B cell (primary cell): ENCODE measurements at regions of chr22 and their contacts with region 1.

Region 1: DNA sequence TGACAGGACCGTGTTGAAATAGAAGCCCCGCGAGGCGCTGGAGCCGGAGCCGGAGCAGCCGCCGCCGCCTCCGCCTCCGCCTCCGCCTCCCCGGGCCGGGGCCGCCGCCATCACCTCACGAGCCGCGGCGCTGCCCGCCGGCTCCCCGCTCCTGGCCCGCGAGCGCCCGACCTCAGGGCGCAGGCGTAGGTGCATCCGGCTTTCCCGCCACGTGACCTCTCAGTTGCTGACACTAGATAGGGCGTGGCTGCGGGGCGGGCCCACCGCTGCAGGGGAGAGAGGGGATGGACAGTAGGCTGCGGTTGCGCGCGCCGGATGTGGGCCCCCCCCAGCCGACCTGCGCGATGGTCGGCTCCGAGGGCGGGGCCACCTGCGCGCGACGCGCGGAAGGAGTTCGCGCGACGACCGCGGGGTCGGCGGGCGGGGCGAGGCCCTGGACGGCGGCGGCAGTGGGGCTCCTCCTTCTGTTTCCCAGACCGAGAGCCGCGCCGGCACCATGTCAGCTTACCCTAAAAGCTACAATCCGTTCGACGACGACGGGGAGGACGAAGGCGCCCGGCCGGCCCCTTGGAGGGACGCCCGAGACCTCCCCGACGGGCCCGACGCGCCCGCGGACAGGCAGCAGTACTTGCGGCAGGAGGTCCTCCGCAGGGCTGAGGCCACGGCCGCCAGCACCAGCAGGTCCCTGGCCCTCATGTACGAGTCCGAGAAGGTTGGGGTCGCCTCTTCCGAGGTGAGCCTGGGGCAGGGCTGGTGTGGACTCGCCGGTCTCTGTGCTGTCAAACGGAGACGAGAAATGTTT is at the starts of genes PI4KA and SNAP29:
- DNase-seq: peak; percentile 99
- ATAC-seq: peak; percentile 92
- H3K4me3 ChIP-seq: peak within 1 kb of the TSS; percentile 80 to 94 (median 87)
- H3K4me3 Mint-ChIP-seq: peak within 1 kb of the TSS; percentile 92
- H3K27ac ChIP-seq: peak within 1 kb of the TSS; percentile 76 to 85
- H3K27ac Mint-ChIP-seq: peak within 1 kb of the TSS; percentile 94
- H3K4me1 ChIP-seq: peaks cover 18 to 30% of the 10 kb centered on the region in 2 donors
- H3K4me1 Mint-ChIP-seq: peaks cover 51% of the 10 kb centered on the region
- H3K27me3 ChIP-seq: no peaks in the 10 kb centered on the region
- H3K27me3 Mint-ChIP-seq: no peaks in the 10 kb centered on the region
- CTCF ChIP-seq: no peak
- total RNA-seq, gene PI4KA: 149 and 156 TPM in 2 replicates
- total RNA-seq, gene SNAP29: 17.4 and 18.8 TPM in 2 replicates

Region 2: DNA sequence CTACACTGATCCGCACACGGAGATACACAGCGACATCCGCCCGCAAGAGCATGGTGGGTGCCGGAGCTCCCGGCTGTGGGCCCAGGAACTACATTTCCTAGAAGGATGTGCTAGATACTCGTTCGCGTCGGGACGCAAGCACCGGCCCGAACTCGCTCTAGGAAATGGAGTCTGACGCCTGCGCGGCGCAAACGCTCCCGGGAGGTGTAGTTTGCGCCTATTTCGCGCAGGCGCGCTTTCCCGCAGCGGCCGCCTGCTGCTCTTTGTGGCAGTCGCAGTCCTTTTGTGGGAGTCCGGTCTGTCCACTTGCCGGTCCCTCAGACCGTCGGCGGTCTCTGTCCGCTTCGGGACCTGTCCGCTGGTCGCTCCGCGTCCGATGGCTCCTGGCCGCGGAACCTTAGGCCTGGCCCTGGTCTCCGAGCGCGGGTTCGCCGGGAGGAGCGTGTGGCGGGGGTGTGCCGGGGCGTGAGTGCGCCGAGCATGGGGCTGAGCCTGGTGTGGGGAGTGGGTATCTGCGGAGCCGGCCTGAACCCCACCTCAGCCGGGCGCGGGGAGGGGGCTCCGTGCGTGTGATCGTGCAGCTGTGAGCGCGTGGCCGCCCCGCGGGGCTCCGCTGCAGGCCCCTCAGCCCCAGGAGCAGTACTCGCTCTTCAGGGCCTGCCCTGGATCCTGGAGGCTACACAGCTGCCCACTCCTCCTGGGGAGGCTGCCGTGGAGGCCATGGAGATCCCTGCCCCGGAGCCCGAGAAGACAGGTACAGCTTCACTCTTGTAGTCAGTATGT is 464.7 kb before region 1 on chr22 and contains the start of gene ZNF74:
- CTCF ChIA-PET with region 1: no interaction called
- POLR2A ChIA-PET with region 1: no interaction called
- intact Hi-C with region 1: loop called (anchors 5 kb)
- DNase-seq: peak; percentile 88
- ATAC-seq: peak; percentile 95
- H3K4me3 ChIP-seq: peak within 1 kb of the TSS; percentile 53 to 86 (median 74)
- H3K4me3 Mint-ChIP-seq: peak within 1 kb of the TSS; percentile 97
- H3K27ac ChIP-seq: peak within 1 kb of the TSS; percentile 47 to 77
- H3K27ac Mint-ChIP-seq: peak within 1 kb of the TSS; percentile 95
- H3K4me1 ChIP-seq: peaks cover 10 to 19% of the 10 kb centered on the region in 2 donors
- H3K4me1 Mint-ChIP-seq: peaks cover 29% of the 10 kb centered on the region
- H3K27me3 ChIP-seq: no peaks in the 10 kb centered on the region
- H3K27me3 Mint-ChIP-seq: no peaks in the 10 kb centered on the region
- CTCF ChIP-seq: no peak
- total RNA-seq, gene ZNF74: 11.6 and 13.0 TPM in 2 replicates

Region 3: DNA sequence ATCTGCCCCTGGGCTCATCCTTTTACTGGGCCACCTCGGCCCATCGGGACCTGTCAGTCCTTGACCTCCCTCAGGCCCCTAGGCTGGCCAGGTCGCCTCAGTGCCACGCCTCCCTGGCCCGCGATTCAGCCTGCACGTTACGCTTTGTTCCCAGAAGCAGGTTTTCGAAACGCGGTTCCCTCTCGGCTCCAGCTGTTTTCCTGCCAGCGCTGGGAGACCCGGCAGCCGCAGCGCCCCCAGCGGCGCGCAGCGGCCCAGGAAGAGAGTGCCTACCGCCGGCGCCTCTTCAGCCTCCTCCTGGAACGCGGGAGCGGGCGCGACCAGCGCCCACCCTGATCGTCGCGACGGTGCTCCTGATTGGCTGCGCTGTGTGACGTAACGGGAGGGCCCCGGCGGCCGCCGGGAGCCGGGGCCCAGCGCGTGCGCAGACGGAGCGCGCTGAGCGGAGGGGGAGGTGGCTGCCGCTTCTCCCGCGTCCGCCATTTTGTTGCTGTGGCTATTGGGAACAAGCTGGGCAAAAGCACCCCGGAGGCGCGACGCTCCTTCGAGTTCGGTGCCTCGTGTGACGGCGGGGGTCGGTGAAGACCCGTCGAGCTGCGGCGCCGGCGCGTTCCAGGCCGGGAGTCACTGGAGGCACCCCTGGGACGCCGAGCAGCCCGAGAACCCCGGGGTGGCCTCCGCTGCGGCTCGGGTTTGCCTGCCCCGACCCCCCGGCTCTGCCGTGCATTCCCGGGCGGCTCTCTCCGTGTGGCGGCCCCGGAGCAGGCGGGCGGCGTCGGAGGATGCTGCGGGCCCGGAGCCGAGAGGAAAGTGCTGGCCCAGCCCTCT is 58.4 kb after region 1 on chr22 and contains the start of gene CRKL:
- CTCF ChIA-PET with region 1: interaction called, 3 read pairs
- POLR2A ChIA-PET with region 1: interaction called, 3 read pairs
- intact Hi-C with region 1: loop called (anchors 1 kb)
- DNase-seq: peak; percentile 98
- ATAC-seq: peak; percentile 97
- H3K4me3 ChIP-seq: peak within 1 kb of the TSS; percentile 84 to 96 (median 94)
- H3K4me3 Mint-ChIP-seq: peak within 1 kb of the TSS; percentile 95
- H3K27ac ChIP-seq: peak within 1 kb of the TSS; percentile 59 to 92
- H3K27ac Mint-ChIP-seq: peak within 1 kb of the TSS; percentile 88
- H3K4me1 ChIP-seq: peaks cover 23 to 33% of the 10 kb centered on the region in 2 donors
- H3K4me1 Mint-ChIP-seq: peaks cover 39% of the 10 kb centered on the region
- H3K27me3 ChIP-seq: no peaks in the 10 kb centered on the region
- H3K27me3 Mint-ChIP-seq: no peaks in the 10 kb centered on the region
- CTCF ChIP-seq: peak; percentile 88
- total RNA-seq, gene CRKL: 75.3 and 76.7 TPM in 2 replicates

Region 4: GRCh38 chr22:20989323-20990138 is 130.7 kb after region 1 on chr22:
- CTCF ChIA-PET with region 1: no interaction called
- POLR2A ChIA-PET with region 1: no interaction called
- intact Hi-C with region 1: no loop called
- DNase-seq: no peak
- ATAC-seq: no peak
- H3K4me3 ChIP-seq: no peak overlapping the region
- H3K4me3 Mint-ChIP-seq: no peak overlapping the region
- H3K27ac ChIP-seq: no peak overlapping the region
- H3K27ac Mint-ChIP-seq: peak overlapping the region; percentile 41
- H3K4me1 ChIP-seq: no peaks in the 10 kb centered on the region
- H3K4me1 Mint-ChIP-seq: no peaks in the 10 kb centered on the region
- H3K27me3 ChIP-seq: no peaks in the 10 kb centered on the region
- H3K27me3 Mint-ChIP-seq: no peaks in the 10 kb centered on the region
- CTCF ChIP-seq: no peak